HepG2 (cell line): ENCODE measurements at regions of chr16 and their contacts with region 1.

Region 1: GRCh38 chr16:87790278-87791032 is 24.7 kb upstream of the KLHDC4 start:
- DNase-seq: no peak
- ATAC-seq: peak; percentile 8; the same call in 2 of the 3 replicates
- H3K4me3 ChIP-seq: peak overlapping the region in 1 of 3 experiments; percentile 64; a peak in 2 of 6 replicates
- H3K27ac ChIP-seq: peak overlapping the region; percentile 88
- H3K4me1 ChIP-seq: peaks cover 77% of the 10 kb centered on the region
- H3K27me3 ChIP-seq: no peaks in the 10 kb centered on the region
- CTCF ChIP-seq: no peak
- EP300 ChIP-seq: no peak
- POLR2A ChIP-seq: no peak
- RAD21 ChIP-seq: no peak

Region 2: GRCh38 chr16:87842209-87842869 is 51.9 kb after region 1 on chr16:
- CTCF ChIA-PET with region 1: no interaction called
- POLR2A ChIA-PET with region 1: interaction called, 21 read pairs
- in situ Hi-C with region 1: no loop called
- intact Hi-C with region 1: no loop called
- DNase-seq: peak; percentile 51
- ATAC-seq: peak; percentile 18
- H3K4me3 ChIP-seq: no peak overlapping the region
- H3K27ac ChIP-seq: peak overlapping the region; percentile 76
- H3K4me1 ChIP-seq: peaks cover 90% of the 10 kb centered on the region
- H3K27me3 ChIP-seq: no peaks in the 10 kb centered on the region
- CTCF ChIP-seq: no peak
- EP300 ChIP-seq: peak; percentile 41 to 66; a peak in 3 of 4 replicates
- POLR2A ChIP-seq: 0 out of 4 replicates have a peak, but pooled peaks of 1 of the 2 experiments have one; percentile 7
- RAD21 ChIP-seq: peak; percentile 7; the same call in 1 of the 2 replicates

Region 3: DNA sequence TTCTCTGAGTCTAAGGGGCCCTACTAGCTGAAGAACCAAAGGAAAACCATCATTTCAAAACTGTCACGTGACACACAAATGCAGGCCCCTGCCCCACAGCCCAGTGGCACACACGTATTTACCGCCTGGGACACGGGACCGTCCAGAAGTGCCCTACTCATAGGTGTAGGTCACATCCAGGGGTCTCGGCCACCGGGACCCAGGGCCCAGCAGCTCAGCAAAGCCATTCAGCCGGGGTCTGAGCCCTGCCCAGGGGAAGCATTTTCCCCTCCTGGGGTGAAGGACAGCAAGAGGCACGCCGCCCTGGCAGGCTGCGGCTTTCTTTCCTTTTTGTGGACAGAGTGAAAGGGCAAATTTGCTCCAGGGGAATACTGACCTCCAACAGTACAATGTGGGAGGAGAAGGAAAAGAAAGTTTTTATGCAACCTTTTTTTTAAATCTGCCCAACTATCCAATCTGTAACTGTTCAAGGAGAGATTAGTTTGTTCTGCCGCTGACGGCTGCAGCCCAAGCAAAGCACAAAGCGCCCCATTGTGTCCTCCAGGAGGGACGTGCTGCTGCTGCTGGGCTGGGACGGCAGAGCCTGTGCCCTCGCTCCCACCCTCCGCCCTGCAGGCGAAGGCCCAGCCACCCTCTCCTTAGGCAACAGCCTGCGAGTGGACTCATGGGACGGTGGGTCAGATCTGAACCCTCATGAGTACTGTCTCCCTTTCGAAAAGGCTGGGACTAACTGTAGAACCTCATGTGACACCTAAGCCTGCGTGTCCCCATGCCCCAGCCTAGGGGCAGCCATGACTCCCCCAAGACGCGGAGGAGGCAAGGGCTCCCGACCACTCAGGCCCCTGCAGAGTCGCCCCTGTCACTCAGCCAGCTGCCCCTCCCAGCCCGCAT is 57.6 kb after region 1 on chr16:
- CTCF ChIA-PET with region 1: no interaction called
- POLR2A ChIA-PET with region 1: interaction called, 21 read pairs
- in situ Hi-C with region 1: no loop called
- intact Hi-C with region 1: no loop called
- DNase-seq: peak; percentile 99
- ATAC-seq: peak; percentile 85
- H3K4me3 ChIP-seq: peak overlapping the region in 2 of 3 experiments; percentile 2 to 64; a peak in 2 of 6 replicates
- H3K27ac ChIP-seq: peak overlapping the region; percentile 98
- H3K4me1 ChIP-seq: peaks cover 99% of the 10 kb centered on the region
- H3K27me3 ChIP-seq: no peaks in the 10 kb centered on the region
- CTCF ChIP-seq: peak; percentile 65
- EP300 ChIP-seq: peak; percentile 86 to 89
- POLR2A ChIP-seq: peak in 1 of 2 experiments; percentile 74; a peak in 2 of 4 replicates
- RAD21 ChIP-seq: peak; percentile 64

Region 4: GRCh38 chr16:87853411-87854052 is 63.1 kb after region 1 on chr16:
- CTCF ChIA-PET with region 1: no interaction called
- POLR2A ChIA-PET with region 1: interaction called, 21 read pairs
- in situ Hi-C with region 1: no loop called
- intact Hi-C with region 1: no loop called
- DNase-seq: peak; percentile 89
- ATAC-seq: peak; percentile 2
- H3K4me3 ChIP-seq: peak overlapping the region in 2 of 3 experiments; percentile 18 to 62; a peak in 4 of 6 replicates
- H3K27ac ChIP-seq: peak overlapping the region; percentile 98
- H3K4me1 ChIP-seq: peaks cover 100% of the 10 kb centered on the region
- H3K27me3 ChIP-seq: no peaks in the 10 kb centered on the region
- CTCF ChIP-seq: peak; percentile 39
- EP300 ChIP-seq: peak; percentile 12 to 63; a peak in 3 of 4 replicates
- POLR2A ChIP-seq: peak in 1 of 2 experiments; percentile 82; a peak in 2 of 4 replicates
- RAD21 ChIP-seq: peak; percentile 36; the same call in 1 of the 2 replicates

Region 5: DNA sequence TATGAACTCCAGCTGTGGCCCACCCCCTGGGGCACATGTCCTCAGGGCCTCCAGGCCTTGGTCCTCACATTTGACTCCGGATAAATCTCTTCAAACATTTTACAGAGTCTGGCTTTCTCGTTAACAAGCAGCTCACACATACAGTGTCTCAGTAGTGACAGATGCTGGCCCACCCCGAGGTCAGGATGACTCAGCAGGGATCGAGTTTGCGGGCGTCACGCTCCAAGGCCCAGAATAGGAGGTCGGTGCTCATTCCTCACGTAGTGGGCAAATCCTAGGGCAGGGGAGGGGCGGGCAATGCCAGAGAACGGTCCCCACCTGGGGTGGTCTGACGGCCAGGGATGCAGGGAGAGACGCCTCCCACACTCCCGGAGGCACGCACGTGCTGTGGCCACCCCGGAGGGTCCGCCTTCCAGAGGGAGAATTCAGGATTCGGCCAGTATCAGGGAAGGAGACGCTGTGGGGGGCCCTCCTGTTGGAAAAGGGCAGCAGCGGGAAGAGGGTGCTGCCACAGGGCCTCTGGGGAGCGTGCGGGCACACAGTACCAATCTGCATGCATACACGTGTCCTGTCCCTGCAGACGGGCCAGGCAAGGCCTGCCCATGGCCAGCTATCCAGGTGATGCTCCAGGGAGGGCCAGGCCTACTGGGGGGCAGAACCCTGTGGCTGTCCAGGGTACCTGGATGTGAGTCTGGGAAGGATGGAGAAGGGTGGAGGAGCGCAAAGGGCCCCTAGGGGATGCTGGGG is 70.3 kb after region 1 on chr16:
- CTCF ChIA-PET with region 1: no interaction called
- POLR2A ChIA-PET with region 1: interaction called, 15 read pairs
- in situ Hi-C with region 1: no loop called
- intact Hi-C with region 1: no loop called
- DNase-seq: peak; percentile 84
- ATAC-seq: peak; percentile 9
- H3K4me3 ChIP-seq: peak overlapping the region; percentile 6 to 66 (median 49); a peak in 5 of 6 replicates
- H3K27ac ChIP-seq: peak overlapping the region; percentile 98
- H3K4me1 ChIP-seq: peaks cover 97% of the 10 kb centered on the region
- H3K27me3 ChIP-seq: no peaks in the 10 kb centered on the region
- CTCF ChIP-seq: no peak
- EP300 ChIP-seq: peak in 1 of 2 experiments; percentile 40; a peak in 1 of 4 replicates
- POLR2A ChIP-seq: peak in 1 of 2 experiments; percentile 43; a peak in 3 of 4 replicates
- RAD21 ChIP-seq: 0 out of 2 replicates have a peak, but pooled peaks have one; percentile 7